ENCODE measurements at regions of chr13 and their contacts with region 1.

Region 1: GRCh38 chr13:98523455-98524102 is 53.3 kb downstream of the STK24 start:
- DNase-seq: no peak
- ATAC-seq: no peak
- H3K4me3 ChIP-seq: no peak overlapping the region
- H3K4me3 Mint-ChIP-seq: no peak overlapping the region
- H3K27ac ChIP-seq: no peak overlapping the region
- H3K27ac Mint-ChIP-seq: peak overlapping the region; percentile 71
- H3K4me1 ChIP-seq: peaks cover 71% of the 10 kb centered on the region
- H3K4me1 Mint-ChIP-seq: peaks cover 92% of the 10 kb centered on the region
- H3K27me3 ChIP-seq: no peaks in the 10 kb centered on the region
- H3K27me3 Mint-ChIP-seq: no peaks in the 10 kb centered on the region
- CTCF ChIP-seq: no peak

Region 2: GRCh38 chr13:98368019-98368418 is 155.6 kb before region 1 on chr13:
- CTCF ChIA-PET with region 1: no interaction called
- POLR2A ChIA-PET with region 1: no interaction called
- intact Hi-C with region 1: no loop called
- DNase-seq: no peak
- ATAC-seq: no peak
- H3K4me3 ChIP-seq: no peak overlapping the region
- H3K4me3 Mint-ChIP-seq: no peak overlapping the region
- H3K27ac ChIP-seq: no peak overlapping the region
- H3K27ac Mint-ChIP-seq: no peak overlapping the region
- H3K4me1 ChIP-seq: no peaks in the 10 kb centered on the region
- H3K4me1 Mint-ChIP-seq: no peaks in the 10 kb centered on the region
- H3K27me3 ChIP-seq: no peaks in the 10 kb centered on the region
- H3K27me3 Mint-ChIP-seq: peaks cover 22% of the 10 kb centered on the region
- CTCF ChIP-seq: no peak

Region 3: DNA sequence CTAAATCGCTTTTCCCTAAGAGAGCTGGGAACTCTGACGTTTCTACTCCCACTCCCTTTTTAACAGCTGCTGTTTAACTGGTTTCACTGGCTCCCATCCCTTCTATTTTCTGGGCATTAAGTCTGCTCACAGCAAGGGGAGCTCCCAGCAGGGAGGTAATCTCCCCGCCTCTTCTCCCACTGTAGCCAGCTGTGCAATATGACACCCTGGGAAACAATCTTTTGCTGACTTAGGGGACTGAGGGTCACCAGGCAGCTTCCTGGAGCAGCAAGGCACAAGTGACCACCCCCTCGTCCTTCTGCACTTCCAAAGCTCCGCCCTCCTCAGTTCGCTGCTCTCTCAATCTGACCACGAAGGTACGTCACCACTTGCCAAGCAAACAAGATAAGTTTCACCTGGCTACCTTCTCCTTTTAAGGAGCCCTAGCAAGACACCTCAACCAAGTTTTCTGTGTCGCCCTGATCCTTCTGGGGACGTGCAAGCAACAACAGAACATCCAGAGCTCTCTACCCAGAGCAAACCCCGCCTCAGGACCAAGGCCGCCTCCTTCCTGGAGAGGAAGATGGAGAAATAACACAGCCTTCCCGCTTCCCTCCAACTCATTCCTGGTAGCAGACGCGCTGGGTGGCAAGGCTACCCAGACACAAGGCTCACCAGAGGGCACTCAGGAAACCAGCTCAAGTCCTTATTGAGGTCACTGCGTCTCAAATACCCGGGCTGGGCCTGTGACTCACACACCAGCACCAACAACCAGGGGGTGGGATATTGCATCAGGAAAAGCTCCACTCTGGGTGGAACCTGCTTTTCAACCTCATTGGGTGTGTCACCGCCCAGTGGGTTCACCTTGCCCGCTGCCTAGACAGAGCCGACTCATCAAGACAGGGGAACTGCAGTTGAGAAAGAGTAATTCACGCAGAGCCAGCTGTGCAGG is 39.0 kb before region 1 on chr13:
- CTCF ChIA-PET with region 1: no interaction called
- POLR2A ChIA-PET with region 1: no interaction called
- intact Hi-C with region 1: loop called in 1 of 2 experiments (anchors 5 kb)
- DNase-seq: peak; percentile 24 to 79 (median 57)
- ATAC-seq: peak; percentile 77
- H3K4me3 ChIP-seq: no peak overlapping the region
- H3K4me3 Mint-ChIP-seq: peak overlapping the region; percentile 53
- H3K27ac ChIP-seq: no peak overlapping the region
- H3K27ac Mint-ChIP-seq: peak overlapping the region; percentile 81
- H3K4me1 ChIP-seq: peaks cover 24% of the 10 kb centered on the region
- H3K4me1 Mint-ChIP-seq: peaks cover 79% of the 10 kb centered on the region
- H3K27me3 ChIP-seq: no peaks in the 10 kb centered on the region
- H3K27me3 Mint-ChIP-seq: no peaks in the 10 kb centered on the region
- CTCF ChIP-seq: no peak